ENCODE measurements at regions of chr17 and their contacts with region 1.

Region 1: GRCh38 chr17:73172252-73172651 is 7.4 kb downstream of the SSTR2 start:
- DNase-seq: no peak
- H3K4me3 ChIP-seq: no peak overlapping the region
- H3K27ac ChIP-seq: no peak overlapping the region
- H3K4me1 ChIP-seq: no peaks in the 10 kb centered on the region
- H3K27me3 ChIP-seq: no peaks in the 10 kb centered on the region
- CTCF ChIP-seq: no peak

Region 2: GRCh38 chr17:73118951-73119391 is 53.3 kb before region 1 on chr17:
- CTCF ChIA-PET with region 1: no interaction called
- POLR2A ChIA-PET with region 1: no interaction called
- intact Hi-C with region 1: loop called (anchors 10 kb)
- DNase-seq: no peak
- H3K4me3 ChIP-seq: no peak overlapping the region
- H3K27ac ChIP-seq: no peak overlapping the region
- H3K4me1 ChIP-seq: no peaks in the 10 kb centered on the region
- H3K27me3 ChIP-seq: no peaks in the 10 kb centered on the region
- CTCF ChIP-seq: no peak

Region 3: GRCh38 chr17:73231841-73232586 is 59.8 kb after region 1 on chr17:
- CTCF ChIA-PET with region 1: no interaction called
- POLR2A ChIA-PET with region 1: no interaction called
- intact Hi-C with region 1: no loop called
- DNase-seq: peak; percentile 81 to 95
- H3K4me3 ChIP-seq: peak overlapping the region; percentile 97
- H3K27ac ChIP-seq: peak overlapping the region; percentile 29
- H3K4me1 ChIP-seq: peaks cover 43% of the 10 kb centered on the region
- H3K27me3 ChIP-seq: no peaks in the 10 kb centered on the region
- CTCF ChIP-seq: peak; percentile 61

Region 4: DNA sequence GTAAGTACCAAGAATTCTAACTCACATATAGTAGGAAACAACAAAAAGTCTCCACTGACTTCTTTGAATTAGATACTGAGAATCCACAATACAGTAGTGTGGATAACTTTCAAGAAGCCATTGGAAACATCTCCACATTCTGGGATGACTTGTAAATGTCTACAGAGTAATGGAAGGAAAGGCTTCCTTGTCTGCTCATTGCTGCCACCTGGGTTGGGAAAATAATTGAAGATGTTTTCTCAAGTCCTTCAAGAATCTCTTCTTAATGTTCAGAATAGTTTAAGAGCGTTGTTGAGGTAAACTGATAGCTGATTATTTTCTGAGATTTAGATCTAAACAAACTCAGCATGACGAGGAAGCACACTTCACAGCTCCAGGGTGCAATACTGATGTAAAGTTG is 75.5 kb after region 1 on chr17:
- CTCF ChIA-PET with region 1: no interaction called
- POLR2A ChIA-PET with region 1: no interaction called
- intact Hi-C with region 1: no loop called
- DNase-seq: no peak
- H3K4me3 ChIP-seq: no peak overlapping the region
- H3K27ac ChIP-seq: no peak overlapping the region
- H3K4me1 ChIP-seq: no peaks in the 10 kb centered on the region
- H3K27me3 ChIP-seq: no peaks in the 10 kb centered on the region
- CTCF ChIP-seq: no peak; the same call in 1 of the 2 replicates

Measured in PC-9 (cell line).